ENCODE measurements at regions of chr18 and their contacts with region 1.

Region 1: GRCh38 chr18:58768293-58768974 is 96.2 kb upstream of the ZNF532 start:
- DNase-seq: peak in 1 of 2 experiments; percentile 69
- H3K4me3 ChIP-seq: peak overlapping the region; percentile 47; the same call in 1 of the 2 replicates
- H3K27ac ChIP-seq: no peak overlapping the region
- H3K4me1 ChIP-seq: no peaks in the 10 kb centered on the region
- H3K27me3 ChIP-seq: 0 out of 2 replicates have a peak, but pooled peaks cover 3% of the 10 kb centered on the region
- CTCF ChIP-seq: peak; percentile 84

Region 2: GRCh38 chr18:58400337-58400870 is 368.0 kb before region 1 on chr18:
- CTCF ChIA-PET with region 1: interaction called, 4 read pairs
- POLR2A ChIA-PET with region 1: no interaction called
- intact Hi-C with region 1: loop called (anchors 2 kb)
- DNase-seq: no peak
- H3K4me3 ChIP-seq: no peak overlapping the region
- H3K27ac ChIP-seq: no peak overlapping the region
- H3K4me1 ChIP-seq: no peaks in the 10 kb centered on the region
- H3K27me3 ChIP-seq: no peaks in the 10 kb centered on the region
- CTCF ChIP-seq: no peak

Region 3: GRCh38 chr18:59070181-59070912 is 301.9 kb after region 1 on chr18:
- CTCF ChIA-PET with region 1: interaction called, 8 read pairs
- POLR2A ChIA-PET with region 1: no interaction called
- intact Hi-C with region 1: loop called (anchors 1 kb)
- DNase-seq: peak; percentile 64 to 66
- H3K4me3 ChIP-seq: no peak overlapping the region
- H3K27ac ChIP-seq: no peak overlapping the region
- H3K4me1 ChIP-seq: no peaks in the 10 kb centered on the region
- H3K27me3 ChIP-seq: no peaks in the 10 kb centered on the region
- CTCF ChIP-seq: peak; percentile 87

Measured in PC-9 (cell line).